ENCODE measurements at regions of chr19 and their contacts with region 1.

Region 1: GRCh38 chr19:42450314-42450934 is 7.7 kb upstream of the CXCL17 start:
- DNase-seq: peak; percentile 86
- ATAC-seq: peak; percentile 84

Region 2: DNA sequence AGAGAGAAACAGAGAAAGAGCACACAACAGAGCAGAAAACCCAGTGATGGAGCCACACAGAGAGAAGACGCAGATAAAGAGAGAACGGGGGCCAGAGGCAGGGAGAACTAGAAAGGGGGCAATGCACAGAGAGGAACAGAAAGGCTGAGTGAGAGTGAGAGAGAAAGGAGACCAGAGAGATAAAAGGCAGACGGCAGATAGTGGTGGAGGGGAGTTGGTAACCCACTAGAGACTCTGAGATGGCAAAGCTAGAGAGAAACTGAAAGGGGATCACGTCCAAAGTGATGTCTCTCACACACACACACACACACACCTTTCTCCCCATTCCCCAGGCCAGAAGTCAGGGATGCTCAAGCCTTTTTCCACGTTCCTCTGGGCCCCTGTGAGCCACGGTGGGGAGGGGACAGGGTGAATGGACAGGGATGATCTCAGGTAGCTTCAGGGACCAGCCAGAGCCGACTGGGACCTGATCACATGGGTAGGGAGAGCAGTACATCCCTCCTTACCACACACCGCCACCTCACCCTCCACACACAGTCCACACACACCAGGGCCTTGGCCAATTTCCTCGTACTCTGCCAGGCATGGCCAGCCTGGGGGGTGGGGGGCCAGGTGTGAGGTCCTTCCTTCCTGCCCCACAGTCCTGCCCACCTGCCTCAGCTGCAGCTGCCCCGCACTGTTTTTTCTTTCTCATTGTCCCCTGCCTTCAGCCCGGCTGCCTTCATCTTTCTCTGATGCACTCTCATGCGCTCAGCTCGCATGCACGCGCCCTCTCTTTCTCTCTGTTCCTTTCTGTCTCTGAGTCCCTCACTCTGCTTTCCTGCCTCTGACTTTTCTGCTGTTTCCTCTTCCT is 295.7 kb before region 1 on chr19:
- intact Hi-C with region 1: no loop called
- DNase-seq: no peak
- ATAC-seq: no peak

Region 3: GRCh38 chr19:42352301-42353259 is 97.8 kb before region 1 on chr19:
- intact Hi-C with region 1: no loop called
- DNase-seq: no peak
- ATAC-seq: no peak

Region 4: GRCh38 chr19:42512743-42513304 is 62.4 kb after region 1 on chr19:
- intact Hi-C with region 1: no loop called
- DNase-seq: no peak
- ATAC-seq: no peak

Region 5: DNA sequence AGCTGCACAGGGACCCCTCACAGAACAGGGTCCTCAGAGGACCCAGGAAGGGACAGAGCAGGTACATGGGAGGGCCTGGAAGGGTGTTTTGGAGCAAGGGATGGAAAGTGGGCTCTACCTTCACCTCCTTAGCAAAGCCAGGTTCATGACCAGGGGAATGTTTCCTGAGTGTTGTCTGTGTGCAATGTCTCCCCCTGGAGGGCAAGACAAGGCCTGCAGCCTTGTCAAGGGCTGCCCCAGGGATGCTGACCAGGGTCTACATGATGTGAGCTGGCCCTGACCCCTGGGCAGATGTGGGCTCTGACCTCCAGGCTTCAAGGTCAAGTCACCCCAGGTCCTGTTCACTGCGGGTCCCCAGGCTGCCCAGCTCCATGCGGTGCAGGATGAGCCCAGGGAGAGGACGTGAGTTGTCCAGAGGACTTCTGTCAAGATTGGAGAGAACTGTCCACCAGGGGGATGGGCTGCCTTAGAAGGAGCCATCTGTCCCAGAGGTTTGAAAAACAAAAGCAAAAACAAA is 78.9 kb after region 1 on chr19:
- intact Hi-C with region 1: loop called (anchors 2 kb)
- DNase-seq: peak; percentile 72
- ATAC-seq: peak; percentile 92

Region 6: DNA sequence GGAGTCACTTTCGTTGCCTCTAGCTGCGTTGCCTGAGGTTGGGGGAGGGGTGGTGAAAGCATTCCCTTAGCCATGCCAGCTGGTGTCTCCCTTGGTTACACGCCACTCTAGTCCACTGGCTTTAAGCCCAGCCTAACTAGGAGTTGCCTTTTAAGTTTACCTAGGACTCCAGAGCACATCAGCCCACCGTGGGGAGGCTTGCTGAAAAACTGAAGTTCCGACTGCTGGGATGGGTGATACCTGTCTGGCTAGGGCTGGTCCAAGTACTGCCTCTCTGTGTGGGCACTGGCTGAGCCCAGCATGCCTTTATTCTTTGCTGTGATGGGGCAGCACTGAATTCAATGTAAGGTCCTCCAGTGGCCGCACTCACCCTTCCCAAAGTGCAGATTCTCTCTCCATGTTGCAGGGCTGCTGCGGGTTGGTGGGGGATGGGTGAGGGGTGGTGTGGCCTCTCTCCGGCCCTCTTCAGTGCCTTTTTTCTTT is 89.7 kb after region 1 on chr19:
- intact Hi-C with region 1: no loop called
- DNase-seq: no peak
- ATAC-seq: no peak